H1 (cell line): ENCODE measurements at regions of chr7 and their contacts with region 1.

Region 1: GRCh38 chr7:138008547-138009349 is 6.9 kb upstream of the CREB3L2 start:
- DNase-seq: peak in 1 of 2 experiments; percentile 57
- H3K4me3 ChIP-seq: no peak overlapping the region
- H3K27ac ChIP-seq: no peak overlapping the region
- H3K4me1 ChIP-seq: peaks cover 0 to 2% (median 1%) of the 10 kb centered on the region in 4 experiments; a peak in 2 of 7 replicates
- H3K27me3 ChIP-seq: no peaks in the 10 kb centered on the region
- CTCF ChIP-seq: peak in 2 of 3 experiments; percentile 64 to 85; a peak in 3 of 4 replicates
- EP300 ChIP-seq: no peak
- POLR2A ChIP-seq: no peak
- RAD21 ChIP-seq: peak; percentile 91 to 94

Region 2: GRCh38 chr7:137916980-137917645 is 91.6 kb before region 1 on chr7:
- CTCF ChIA-PET with region 1: interaction called, 24 read pairs
- POLR2A ChIA-PET with region 1: interaction called, 3 read pairs
- DNase-seq: no peak
- H3K4me3 ChIP-seq: no peak overlapping the region
- H3K27ac ChIP-seq: no peak overlapping the region
- H3K4me1 ChIP-seq: peaks cover 0 to 13% (median 7%) of the 10 kb centered on the region in 4 experiments; a peak in 4 of 7 replicates
- H3K27me3 ChIP-seq: no peaks in the 10 kb centered on the region
- CTCF ChIP-seq: no peak
- EP300 ChIP-seq: no peak
- POLR2A ChIP-seq: no peak
- RAD21 ChIP-seq: no peak